B cell (primary cell): ENCODE measurements at regions of chr3 and their contacts with region 1.

Region 1: GRCh38 chr3:49093853-49094767 is at the start of gene QRICH1:
- DNase-seq: peak; percentile 99
- ATAC-seq: peak; percentile 77
- H3K4me3 ChIP-seq: peak within 1 kb of the TSS; percentile 72 to 95 (median 88)
- H3K4me3 Mint-ChIP-seq: peak within 1 kb of the TSS; percentile 97
- H3K27ac ChIP-seq: peak within 1 kb of the TSS; percentile 87 to 94
- H3K27ac Mint-ChIP-seq: peak within 1 kb of the TSS; percentile 99
- H3K4me1 ChIP-seq: peaks cover 26 to 33% of the 10 kb centered on the region in 2 donors
- H3K4me1 Mint-ChIP-seq: peaks cover 37% of the 10 kb centered on the region
- H3K27me3 ChIP-seq: no peaks in the 10 kb centered on the region
- H3K27me3 Mint-ChIP-seq: no peaks in the 10 kb centered on the region
- CTCF ChIP-seq: peak; percentile 71
- total RNA-seq, gene QRICH1: 187 and 196 TPM in 2 replicates

Region 2: GRCh38 chr3:48918388-48919214 is 175.5 kb before region 1 on chr3 and contains the start of gene ARIH2:
- CTCF ChIA-PET with region 1: no interaction called
- POLR2A ChIA-PET with region 1: no interaction called
- intact Hi-C with region 1: loop called (anchors 2 kb)
- DNase-seq: peak; percentile 96
- ATAC-seq: peak; percentile 81
- H3K4me3 ChIP-seq: peak within 1 kb of the TSS; percentile 76 to 94 (median 83)
- H3K4me3 Mint-ChIP-seq: peak within 1 kb of the TSS; percentile 99
- H3K27ac ChIP-seq: peak within 1 kb of the TSS; percentile 96 to 99
- H3K27ac Mint-ChIP-seq: peak within 1 kb of the TSS; percentile 99
- H3K4me1 ChIP-seq: peaks cover 14 to 27% of the 10 kb centered on the region in 2 donors
- H3K4me1 Mint-ChIP-seq: peaks cover 27% of the 10 kb centered on the region
- H3K27me3 ChIP-seq: no peaks in the 10 kb centered on the region
- H3K27me3 Mint-ChIP-seq: no peaks in the 10 kb centered on the region
- CTCF ChIP-seq: peak; percentile 49
- total RNA-seq, gene ARIH2: 148 and 162 TPM in 2 replicates

Region 3: DNA sequence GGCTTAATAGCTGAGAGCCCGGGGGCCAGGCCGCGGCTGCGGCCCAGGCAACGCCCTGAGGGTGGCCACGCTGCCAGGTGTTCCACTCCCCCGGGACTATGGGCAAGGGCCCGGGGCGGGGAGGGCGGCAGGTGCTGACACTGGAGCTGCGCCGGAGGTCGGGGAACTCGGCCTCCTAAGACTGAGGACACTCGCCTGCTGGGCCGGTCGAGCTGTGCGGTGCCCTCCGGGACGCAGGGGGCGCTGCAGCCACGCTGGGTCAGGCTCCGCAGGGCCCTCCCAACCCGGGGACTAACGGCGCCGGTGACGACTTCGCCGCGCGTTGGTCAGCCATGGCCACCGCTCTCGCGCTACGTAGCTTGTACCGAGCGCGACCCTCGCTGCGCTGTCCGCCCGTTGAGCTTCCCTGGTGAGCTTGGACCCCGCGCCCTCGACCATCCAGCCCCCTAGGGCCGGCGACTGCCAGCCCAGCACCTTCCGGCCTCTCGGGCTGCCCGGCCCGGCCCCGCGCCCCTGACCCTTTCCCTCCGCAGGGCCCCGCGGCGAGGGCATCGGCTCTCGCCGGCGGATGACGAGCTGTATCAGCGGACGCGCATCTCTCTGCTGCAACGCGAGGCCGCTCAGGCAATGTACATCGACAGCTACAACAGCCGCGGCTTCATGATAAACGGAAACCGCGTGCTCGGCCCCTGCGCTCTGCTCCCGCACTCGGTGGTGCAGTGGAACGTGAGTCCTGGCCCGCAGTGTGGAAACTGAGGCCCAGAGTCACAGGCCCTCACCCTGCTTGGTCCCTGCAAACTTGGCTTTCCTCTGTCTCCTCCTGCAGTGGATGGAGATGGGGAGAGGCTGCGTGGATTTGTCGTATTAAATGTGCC is 72.1 kb before region 1 on chr3 and contains the start of gene NDUFAF3:
- CTCF ChIA-PET with region 1: interaction called, 5 read pairs
- POLR2A ChIA-PET with region 1: interaction called, 37 read pairs
- intact Hi-C with region 1: loop called (anchors 1 kb)
- DNase-seq: peak; percentile 96
- ATAC-seq: peak; percentile 66
- H3K4me3 ChIP-seq: peak within 1 kb of the TSS; percentile 66 to 92 (median 89)
- H3K4me3 Mint-ChIP-seq: peak within 1 kb of the TSS; percentile 96
- H3K27ac ChIP-seq: peak within 1 kb of the TSS; percentile 96 to 98
- H3K27ac Mint-ChIP-seq: peak within 1 kb of the TSS; percentile 97
- H3K4me1 ChIP-seq: peaks cover 36 to 60% of the 10 kb centered on the region in 2 donors
- H3K4me1 Mint-ChIP-seq: peaks cover 65% of the 10 kb centered on the region
- H3K27me3 ChIP-seq: no peaks in the 10 kb centered on the region
- H3K27me3 Mint-ChIP-seq: no peaks in the 10 kb centered on the region
- CTCF ChIP-seq: peak; percentile 95
- total RNA-seq, gene NDUFAF3: 67.0 and 67.5 TPM in 2 replicates

Region 4: DNA sequence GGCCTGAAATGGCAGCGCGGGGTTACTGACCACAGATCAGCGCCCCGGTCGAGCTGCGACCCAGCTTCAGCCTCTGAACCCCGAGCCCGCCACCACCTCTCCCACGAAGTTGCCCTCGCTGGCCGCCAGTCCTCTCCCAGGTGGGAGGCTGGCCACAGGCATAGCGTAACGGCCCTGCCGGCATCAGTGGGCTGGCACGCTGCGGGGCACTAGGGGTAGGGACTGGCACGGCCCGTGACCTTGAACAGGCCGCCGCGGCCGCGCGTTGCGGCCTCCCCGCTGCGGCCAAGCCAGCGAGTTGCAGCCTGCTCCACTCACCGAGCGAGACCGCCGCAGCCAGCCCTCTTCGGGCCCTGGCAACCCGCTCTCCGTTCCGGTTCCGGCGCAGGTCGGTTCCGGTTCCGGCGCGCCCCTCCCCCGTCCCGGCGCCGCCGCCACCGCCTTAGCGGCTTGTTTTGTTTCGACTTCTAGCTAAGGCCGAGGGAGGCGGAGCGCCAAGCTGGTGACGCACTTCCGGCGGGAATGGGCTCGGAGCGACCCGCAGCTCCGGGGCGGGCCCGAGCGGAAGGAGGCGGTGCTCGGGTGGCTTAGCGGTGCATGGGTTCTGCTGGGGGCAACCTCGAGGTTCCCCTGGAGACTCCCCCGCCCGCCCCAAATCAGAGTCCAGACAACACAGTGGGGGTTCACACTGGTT is 26.5 kb after region 1 on chr3 and contains the start of gene USP19:
- CTCF ChIA-PET with region 1: interaction called, 14 read pairs
- POLR2A ChIA-PET with region 1: interaction called, 32 read pairs
- intact Hi-C with region 1: loop called (anchors 1 kb)
- DNase-seq: peak; percentile 97
- ATAC-seq: peak; percentile 95
- H3K4me3 ChIP-seq: peak within 1 kb of the TSS; percentile 67 to 85 (median 74)
- H3K4me3 Mint-ChIP-seq: peak within 1 kb of the TSS; percentile 88
- H3K27ac ChIP-seq: peak within 1 kb of the TSS; percentile 82 to 92
- H3K27ac Mint-ChIP-seq: peak within 1 kb of the TSS; percentile 89
- H3K4me1 ChIP-seq: peaks cover 12 to 21% of the 10 kb centered on the region in 2 donors
- H3K4me1 Mint-ChIP-seq: peaks cover 15% of the 10 kb centered on the region
- H3K27me3 ChIP-seq: no peaks in the 10 kb centered on the region
- H3K27me3 Mint-ChIP-seq: no peaks in the 10 kb centered on the region
- CTCF ChIP-seq: no peak
- total RNA-seq, gene USP19: 87.3 and 89.9 TPM in 2 replicates

Region 5: DNA sequence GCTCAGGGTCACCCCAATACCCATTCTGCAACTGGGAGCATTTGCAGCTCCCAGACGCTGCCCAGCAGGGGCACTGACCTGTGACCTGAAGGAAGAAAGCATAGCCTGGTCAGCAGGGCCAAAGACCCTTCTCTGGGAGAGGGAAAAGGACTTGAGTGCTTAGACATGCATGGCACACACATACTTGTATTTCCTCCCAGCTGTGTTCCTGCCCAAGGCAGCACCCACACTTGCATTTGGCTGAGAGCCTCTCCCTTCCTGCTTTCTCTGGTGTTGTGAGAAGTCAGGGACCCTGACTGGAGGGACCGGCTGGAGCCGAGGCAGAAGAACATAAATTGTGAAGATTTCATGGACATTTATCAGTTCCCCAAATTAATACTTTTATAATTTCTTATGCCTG is 46.0 kb after region 1 on chr3:
- CTCF ChIA-PET with region 1: no interaction called
- POLR2A ChIA-PET with region 1: no interaction called
- intact Hi-C with region 1: no loop called
- DNase-seq: no peak
- ATAC-seq: no peak
- H3K4me3 ChIP-seq: no peak overlapping the region
- H3K4me3 Mint-ChIP-seq: no peak overlapping the region
- H3K27ac ChIP-seq: no peak overlapping the region
- H3K27ac Mint-ChIP-seq: no peak overlapping the region
- H3K4me1 ChIP-seq: no peaks in the 10 kb centered on the region
- H3K4me1 Mint-ChIP-seq: no peaks in the 10 kb centered on the region
- H3K27me3 ChIP-seq: peaks cover 0 to 21% (median 5%) of the 10 kb centered on the region in 4 experiments
- H3K27me3 Mint-ChIP-seq: peaks cover 29% of the 10 kb centered on the region
- CTCF ChIP-seq: no peak

Region 6: DNA sequence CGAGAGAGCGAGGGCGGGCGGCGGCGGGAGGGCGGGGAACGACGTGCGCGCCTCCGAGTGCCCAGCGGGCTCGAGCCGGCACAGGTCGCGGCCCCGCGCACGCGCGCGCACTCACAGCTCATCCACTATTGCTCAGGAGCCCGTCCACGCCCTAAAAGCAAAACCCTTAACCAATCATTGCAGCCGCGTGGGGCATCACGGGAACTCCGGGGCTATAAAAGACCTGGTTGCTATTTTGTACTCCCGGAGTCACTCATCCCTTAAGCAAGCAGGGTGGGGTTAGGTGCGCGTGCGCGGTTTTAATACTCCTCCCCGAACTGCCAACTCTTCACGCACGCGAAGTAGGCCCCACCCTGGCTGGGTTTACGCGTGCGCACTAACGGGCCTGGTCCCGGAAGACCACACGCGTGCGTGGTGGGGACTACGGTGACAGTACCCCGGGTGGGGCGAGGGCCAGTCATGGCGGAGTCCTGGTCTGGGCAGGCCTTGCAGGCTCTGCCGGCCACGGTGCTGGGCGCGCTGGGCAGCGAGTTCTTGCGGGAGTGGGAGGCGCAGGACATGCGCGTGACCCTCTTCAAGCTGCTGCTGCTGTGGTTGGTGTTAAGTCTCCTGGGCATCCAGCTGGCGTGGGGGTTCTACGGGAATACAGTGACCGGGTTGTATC is 318.0 kb after region 1 on chr3 and contains the starts of genes RHOA and TCTA:
- CTCF ChIA-PET with region 1: no interaction called
- POLR2A ChIA-PET with region 1: interaction called, 4 read pairs
- intact Hi-C with region 1: loop called (anchors 1 kb)
- DNase-seq: peak; percentile 100
- ATAC-seq: peak; percentile 77
- H3K4me3 ChIP-seq: peak within 1 kb of the TSS; percentile 74 to 96 (median 90)
- H3K4me3 Mint-ChIP-seq: peak within 1 kb of the TSS; percentile 96
- H3K27ac ChIP-seq: peak within 1 kb of the TSS; percentile 90 to 97
- H3K27ac Mint-ChIP-seq: peak within 1 kb of the TSS; percentile 96
- H3K4me1 ChIP-seq: peaks cover 71 to 83% of the 10 kb centered on the region in 2 donors
- H3K4me1 Mint-ChIP-seq: peaks cover 74% of the 10 kb centered on the region
- H3K27me3 ChIP-seq: no peaks in the 10 kb centered on the region
- H3K27me3 Mint-ChIP-seq: no peaks in the 10 kb centered on the region
- CTCF ChIP-seq: no peak
- total RNA-seq, gene RHOA: 298 and 306 TPM in 2 replicates
- total RNA-seq, gene TCTA: 46.4 and 49.3 TPM in 2 replicates